ENCODE measurements at regions of chr2 and their contacts with region 1.

Region 1: DNA sequence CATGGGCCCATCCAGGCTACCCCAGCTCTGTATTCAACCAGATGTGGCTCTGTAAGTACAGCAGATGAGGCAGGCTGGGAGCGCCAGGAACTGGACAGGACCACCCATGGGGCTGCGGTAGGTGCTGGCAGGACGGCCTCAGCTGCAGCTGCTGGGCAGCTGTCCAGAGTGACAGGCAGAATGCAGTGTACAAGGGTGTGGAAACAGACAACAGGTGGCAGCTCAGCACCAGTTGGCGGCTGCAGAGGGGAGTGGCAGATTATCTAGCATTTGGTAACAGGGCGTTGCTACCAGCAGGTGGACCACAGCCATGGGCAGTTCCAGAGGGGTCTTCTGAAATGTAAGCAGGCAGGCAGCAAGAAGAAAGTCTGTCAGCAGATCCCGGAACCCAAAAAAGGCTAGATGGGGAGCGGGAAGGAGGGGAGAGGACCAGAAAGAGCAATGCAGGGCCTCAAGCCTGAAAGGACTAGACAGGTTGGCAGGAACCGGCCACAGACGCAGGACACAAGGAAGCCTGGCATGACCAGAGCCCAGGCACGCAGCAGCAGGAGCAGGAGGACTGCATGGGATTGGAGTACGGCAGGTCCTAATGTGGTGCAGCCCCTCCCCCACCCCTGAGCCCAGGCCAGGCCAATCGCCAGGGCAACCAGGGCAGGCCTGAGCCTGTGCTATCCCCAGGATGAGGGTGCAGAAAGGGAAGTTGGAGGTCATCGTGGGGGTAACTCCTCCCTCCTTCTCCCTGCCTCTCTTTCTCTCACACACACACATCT is 24.7 kb downstream of the PKDCC start:
- DNase-seq: no peak
- H3K4me3 ChIP-seq: no peak overlapping the region
- H3K27ac ChIP-seq: no peak overlapping the region
- H3K4me1 ChIP-seq: peaks cover 0 to 18% (median 16%) of the 10 kb centered on the region in 4 experiments
- H3K27me3 ChIP-seq: no peaks in the 10 kb centered on the region

Region 2: GRCh38 chr2:41869542-41870264 is 202.8 kb before region 1 on chr2:
- CTCF ChIA-PET with region 1: interaction called, 32 read pairs
- POLR2A ChIA-PET with region 1: no interaction called
- DNase-seq: peak; percentile 47 to 76 (median 66)
- H3K4me3 ChIP-seq: no peak overlapping the region
- H3K27ac ChIP-seq: no peak overlapping the region
- H3K4me1 ChIP-seq: no peaks in the 10 kb centered on the region
- H3K27me3 ChIP-seq: peaks cover 0 to 6% (median 0%) of the 10 kb centered on the region in 5 experiments

Region 3: DNA sequence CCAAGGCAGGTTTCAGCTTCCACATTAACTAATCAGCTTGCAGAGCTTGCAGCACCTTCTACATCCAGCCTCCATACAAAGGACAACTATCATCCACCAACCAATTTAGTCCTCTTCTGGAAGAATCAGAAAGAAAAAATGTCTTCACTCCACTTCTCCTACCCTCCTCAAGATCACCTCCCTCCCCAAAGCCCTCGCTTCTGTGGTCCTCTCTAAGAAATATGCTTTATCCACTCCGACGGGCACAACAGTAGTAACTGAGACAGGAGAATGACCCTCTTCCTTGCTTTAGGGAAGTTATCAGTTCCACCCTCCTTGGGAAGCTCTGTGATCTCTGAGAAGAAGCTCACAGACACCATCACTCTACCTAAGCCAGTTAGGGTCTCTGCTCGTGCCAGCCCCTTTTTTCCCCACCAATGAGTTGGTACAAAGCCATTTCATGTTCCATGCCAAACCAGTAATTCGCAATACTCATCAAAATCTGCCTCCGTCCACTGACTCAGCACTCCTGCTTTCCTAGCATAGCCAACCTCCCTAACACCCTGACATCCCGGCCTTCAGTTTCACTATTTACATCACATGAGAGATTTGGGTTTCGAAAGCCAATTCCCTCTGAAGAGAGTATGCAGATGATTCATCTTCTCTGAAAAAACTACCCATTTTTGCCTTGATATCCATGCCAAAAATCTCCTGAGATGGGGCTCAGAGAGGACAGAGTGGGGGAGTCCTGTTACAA is 138.8 kb before region 1 on chr2:
- CTCF ChIA-PET with region 1: no interaction called
- POLR2A ChIA-PET with region 1: no interaction called
- DNase-seq: no peak
- H3K4me3 ChIP-seq: no peak overlapping the region
- H3K27ac ChIP-seq: no peak overlapping the region
- H3K4me1 ChIP-seq: no peaks in the 10 kb centered on the region
- H3K27me3 ChIP-seq: peaks cover 0 to 7% (median 0%) of the 10 kb centered on the region in 5 experiments

Measured in common myeloid progenitor, CD34-positive (primary cell).